H1 (cell line): ENCODE measurements at regions of chr22 and their contacts with region 1.

Region 1: DNA sequence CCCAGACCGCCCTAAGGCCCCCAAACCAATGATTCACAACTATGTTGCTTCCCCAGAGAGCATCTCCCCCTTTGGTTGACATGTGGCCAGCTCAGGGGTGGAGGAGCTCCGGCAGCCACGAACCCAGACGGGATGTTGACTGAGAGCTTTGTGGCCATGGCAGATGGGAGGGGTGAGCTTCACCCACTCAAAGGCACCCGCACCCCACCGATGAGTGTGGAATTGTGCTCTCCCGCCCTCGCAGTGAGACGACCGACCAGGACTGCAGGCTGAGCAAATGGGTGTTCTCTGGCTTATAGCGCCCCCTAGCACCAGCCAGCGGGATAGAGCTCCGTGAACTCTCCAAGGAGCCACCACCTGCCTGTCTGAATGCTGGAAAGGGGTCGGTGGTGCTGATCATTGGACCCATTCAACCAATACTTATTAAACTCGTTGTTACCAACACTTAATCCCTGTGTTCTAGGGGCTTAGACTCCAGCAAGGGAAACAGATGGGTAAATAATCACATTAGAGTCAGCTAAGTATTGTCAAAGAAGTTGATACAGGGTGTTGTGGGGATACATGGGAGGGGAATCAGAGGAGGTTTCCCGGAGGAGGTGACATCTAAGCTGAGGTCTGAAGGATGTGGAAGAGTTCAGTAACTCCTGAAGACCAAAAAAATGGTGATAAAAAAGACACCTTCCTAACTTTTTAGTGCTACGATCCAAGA is 4.5 kb upstream of the TIMP3 start:
- DNase-seq: peak in 1 of 2 experiments; percentile 84
- H3K4me3 ChIP-seq: no peak overlapping the region
- H3K27ac ChIP-seq: no peak overlapping the region
- H3K4me1 ChIP-seq: peaks cover 0 to 2% (median 1%) of the 10 kb centered on the region in 4 experiments; a peak in 3 of 7 replicates
- H3K27me3 ChIP-seq: peaks cover 0 to 8% (median 6%) of the 10 kb centered on the region in 4 experiments; a peak in 3 of 7 replicates
- CTCF ChIP-seq: peak; percentile 84 to 95 (median 94)
- EP300 ChIP-seq: no peak
- POLR2A ChIP-seq: no peak
- RAD21 ChIP-seq: peak; percentile 91 to 95

Region 2: DNA sequence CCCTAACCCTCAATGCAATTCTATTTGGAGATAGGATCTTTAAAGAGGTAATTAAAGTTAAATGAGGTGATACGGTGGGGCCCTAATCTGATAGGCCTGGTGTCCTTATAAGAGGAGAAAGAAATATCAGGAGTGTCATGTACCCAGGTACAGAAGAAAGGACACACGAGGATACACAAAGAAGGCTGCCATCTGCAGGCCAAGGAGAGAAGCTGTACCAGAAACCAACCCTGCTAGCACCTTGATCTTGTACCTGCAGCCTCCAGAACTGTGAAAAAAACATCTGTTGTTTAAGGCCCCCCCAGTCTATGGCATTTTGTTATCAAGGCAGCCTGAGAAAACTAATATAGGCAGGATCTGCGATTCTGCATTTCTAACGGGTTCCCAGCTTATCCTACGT is 278.2 kb before region 1 on chr22:
- CTCF ChIA-PET with region 1: interaction called, 16 read pairs
- POLR2A ChIA-PET with region 1: no interaction called
- DNase-seq: no peak
- H3K4me3 ChIP-seq: no peak overlapping the region
- H3K27ac ChIP-seq: no peak overlapping the region
- H3K4me1 ChIP-seq: no peaks in the 10 kb centered on the region
- H3K27me3 ChIP-seq: no peaks in the 10 kb centered on the region
- CTCF ChIP-seq: peak in 1 of 3 experiments; percentile 52; a peak in 1 of 4 replicates
- EP300 ChIP-seq: no peak
- POLR2A ChIP-seq: no peak
- RAD21 ChIP-seq: peak in 1 of 2 experiments; percentile 27; a peak in 1 of 4 replicates

Region 3: GRCh38 chr22:32622004-32622743 is 174.8 kb before region 1 on chr22:
- CTCF ChIA-PET with region 1: interaction called, 32 read pairs
- POLR2A ChIA-PET with region 1: no interaction called
- DNase-seq: peak; percentile 21 to 50
- H3K4me3 ChIP-seq: peak overlapping the region in 1 of 4 experiments; percentile 17; a peak in 1 of 8 replicates
- H3K27ac ChIP-seq: peak overlapping the region; percentile 31; the same call in 1 of the 2 replicates
- H3K4me1 ChIP-seq: peaks cover 2 to 11% (median 7%) of the 10 kb centered on the region in 4 experiments
- H3K27me3 ChIP-seq: peaks cover 0 to 6% (median 1%) of the 10 kb centered on the region in 4 experiments; a peak in 3 of 7 replicates
- CTCF ChIP-seq: no peak
- EP300 ChIP-seq: 0 out of 3 replicates have a peak, but pooled peaks of 1 of the 2 experiments have one; percentile 14
- POLR2A ChIP-seq: no peak
- RAD21 ChIP-seq: no peak

Region 4: GRCh38 chr22:32668254-32669094 is 128.5 kb before region 1 on chr22:
- CTCF ChIA-PET with region 1: interaction called, 32 read pairs
- POLR2A ChIA-PET with region 1: no interaction called
- DNase-seq: no peak
- H3K4me3 ChIP-seq: no peak overlapping the region
- H3K27ac ChIP-seq: no peak overlapping the region
- H3K4me1 ChIP-seq: no peaks in the 10 kb centered on the region
- H3K27me3 ChIP-seq: no peaks in the 10 kb centered on the region; a peak in 1 of 7 replicates
- CTCF ChIP-seq: no peak
- EP300 ChIP-seq: no peak
- POLR2A ChIP-seq: no peak
- RAD21 ChIP-seq: no peak

Region 5: DNA sequence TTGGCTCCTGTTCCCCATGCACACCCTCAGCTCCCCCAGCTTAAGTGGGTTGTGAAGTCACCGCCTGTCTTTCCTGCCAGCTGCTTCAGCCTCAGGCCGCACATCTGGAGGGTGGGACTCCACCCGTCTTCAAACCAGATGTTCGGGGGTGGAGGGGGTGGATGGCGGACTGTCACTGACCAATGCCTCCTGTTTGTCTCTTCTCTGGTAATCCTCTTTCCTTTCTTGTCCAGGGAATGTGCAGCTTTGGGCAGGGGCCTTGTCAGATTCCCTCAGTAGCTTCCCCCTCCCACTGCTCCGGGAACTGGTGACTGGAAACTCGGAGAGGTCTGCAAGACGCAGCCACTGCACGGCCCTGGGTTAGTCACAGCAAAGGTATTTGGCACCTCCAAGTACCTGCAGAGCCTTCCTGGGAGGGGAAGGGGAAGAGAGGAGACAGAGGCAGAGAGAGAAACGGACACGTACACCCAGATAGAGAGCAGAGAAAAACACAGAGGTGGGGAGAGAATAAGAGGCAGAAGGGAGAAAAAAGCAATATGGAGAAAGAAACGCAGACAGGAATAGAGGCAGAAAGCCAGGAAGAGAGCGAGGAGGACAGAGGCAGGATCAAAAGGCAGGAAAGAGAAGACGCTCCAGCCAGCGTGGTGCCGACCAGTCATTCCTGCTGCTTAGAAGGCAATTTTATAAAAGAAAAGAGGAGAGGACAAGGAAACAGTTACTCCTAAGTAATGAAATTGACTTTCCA is 51.6 kb before region 1 on chr22:
- CTCF ChIA-PET with region 1: interaction called, 12 read pairs
- POLR2A ChIA-PET with region 1: interaction called, 3 read pairs
- DNase-seq: peak in 1 of 2 experiments; percentile 27
- H3K4me3 ChIP-seq: no peak overlapping the region
- H3K27ac ChIP-seq: no peak overlapping the region
- H3K4me1 ChIP-seq: no peaks in the 10 kb centered on the region; a peak in 2 of 7 replicates
- H3K27me3 ChIP-seq: no peaks in the 10 kb centered on the region; a peak in 1 of 7 replicates
- CTCF ChIP-seq: no peak
- EP300 ChIP-seq: no peak
- POLR2A ChIP-seq: no peak
- RAD21 ChIP-seq: no peak

Region 6: GRCh38 chr22:32810561-32811004 is 13.6 kb after region 1 on chr22:
- CTCF ChIA-PET with region 1: interaction called, 96 read pairs
- POLR2A ChIA-PET with region 1: interaction called, 30 read pairs
- DNase-seq: no peak
- H3K4me3 ChIP-seq: no peak overlapping the region
- H3K27ac ChIP-seq: no peak overlapping the region
- H3K4me1 ChIP-seq: peaks cover 0 to 4% (median 2%) of the 10 kb centered on the region in 4 experiments; a peak in 4 of 7 replicates
- H3K27me3 ChIP-seq: no peaks in the 10 kb centered on the region; a peak in 1 of 7 replicates
- CTCF ChIP-seq: no peak
- EP300 ChIP-seq: no peak
- POLR2A ChIP-seq: no peak
- RAD21 ChIP-seq: no peak

Region 7: DNA sequence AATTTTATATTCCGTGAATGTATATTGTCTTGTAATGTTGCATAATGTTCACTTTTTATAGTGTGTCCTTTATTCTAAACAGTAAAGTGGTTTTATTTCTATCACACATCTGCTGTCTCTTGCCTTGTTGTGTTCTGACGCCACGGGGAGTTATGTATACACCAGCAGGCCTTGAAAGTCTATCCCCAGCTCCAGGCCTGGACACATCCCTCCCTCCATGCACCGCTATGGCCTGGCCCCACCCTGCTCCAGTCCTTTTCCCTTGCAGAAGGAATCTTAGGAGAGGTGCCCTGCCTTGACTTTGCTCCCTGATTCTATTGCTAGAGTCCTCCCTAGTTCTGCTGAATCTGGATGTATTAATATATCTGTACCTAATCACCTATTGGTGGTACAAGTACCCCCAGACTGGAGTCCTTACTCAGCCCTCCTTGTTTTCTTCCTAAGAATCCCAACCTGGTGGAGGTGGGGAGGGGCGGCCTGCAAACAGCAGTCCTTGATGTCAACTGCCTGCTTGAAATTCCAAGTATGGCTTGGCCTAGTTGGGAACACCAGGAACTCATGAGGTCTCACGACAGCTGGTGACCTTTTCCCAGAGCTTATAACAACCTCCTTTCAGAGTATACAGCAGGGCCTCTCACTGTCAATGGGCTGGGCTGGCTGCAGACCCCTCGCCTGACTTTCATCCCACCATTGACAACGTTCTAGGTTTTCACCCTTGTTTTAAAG is 66.1 kb after region 1 on chr22:
- CTCF ChIA-PET with region 1: no interaction called
- POLR2A ChIA-PET with region 1: no interaction called
- DNase-seq: no peak
- H3K4me3 ChIP-seq: no peak overlapping the region
- H3K27ac ChIP-seq: no peak overlapping the region
- H3K4me1 ChIP-seq: no peaks in the 10 kb centered on the region
- H3K27me3 ChIP-seq: no peaks in the 10 kb centered on the region
- CTCF ChIP-seq: no peak
- EP300 ChIP-seq: no peak
- POLR2A ChIP-seq: no peak
- RAD21 ChIP-seq: no peak